AG04450 (cell line): ENCODE measurements at regions of chr2 and their contacts with region 1.

Region 1: DNA sequence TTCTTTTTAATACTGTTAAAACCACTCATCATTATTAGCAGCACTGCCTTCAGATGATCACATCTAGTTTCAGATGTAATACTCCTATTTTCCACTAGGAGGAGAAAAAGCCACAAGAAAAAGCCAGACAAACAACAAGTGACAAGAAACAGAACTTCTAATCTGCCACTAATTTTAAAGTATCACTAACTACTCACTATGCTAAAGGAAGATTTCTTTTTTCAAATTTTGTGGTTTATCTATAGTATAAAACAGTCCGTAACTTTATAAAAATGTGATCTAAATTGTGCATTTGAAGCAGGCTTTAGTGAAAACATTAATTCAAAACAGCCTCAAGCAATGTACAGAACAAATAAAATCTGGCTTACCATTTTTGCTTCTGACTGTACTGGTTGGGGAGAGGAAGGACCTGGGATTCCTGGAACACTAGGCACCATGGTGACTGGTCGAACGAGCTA is 56.8 kb downstream of the ATF2 start:
- DNase-seq: no peak
- H3K4me3 ChIP-seq: no peak overlapping the region
- H3K27ac ChIP-seq: no peak overlapping the region
- H3K27me3 ChIP-seq: no peaks in the 10 kb centered on the region
- CTCF ChIP-seq: peak; percentile 73

Region 2: DNA sequence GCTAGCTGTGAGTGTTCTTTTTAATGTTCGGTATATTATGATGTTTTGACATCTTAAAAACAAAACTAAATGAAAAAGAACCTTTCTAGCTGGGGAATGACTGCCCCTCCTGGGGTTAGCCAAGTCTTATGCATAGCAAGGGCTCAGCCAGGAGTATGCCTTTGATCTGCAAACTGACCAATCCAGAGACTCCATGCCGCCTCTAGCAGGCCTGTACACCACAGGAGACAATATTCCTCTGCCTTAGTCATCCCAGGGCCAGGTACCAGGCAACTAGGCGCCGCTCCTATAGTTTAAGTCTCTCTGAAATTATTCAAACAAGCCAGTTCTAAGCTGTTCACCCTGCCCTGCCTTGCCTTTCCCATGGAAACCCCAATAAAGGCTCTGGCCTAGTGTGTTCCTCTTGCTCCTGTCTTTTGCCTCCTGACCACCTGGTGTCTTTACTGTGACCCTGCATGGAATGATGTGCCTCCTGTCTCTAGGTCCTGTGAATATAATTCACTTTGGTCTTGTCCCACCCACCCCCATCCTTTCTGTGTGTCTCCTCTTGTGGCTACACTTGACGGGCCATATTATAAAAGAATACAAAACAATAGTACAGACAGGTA is 54.0 kb before region 1 on chr2:
- CTCF ChIA-PET with region 1: no interaction called
- POLR2A ChIA-PET with region 1: no interaction called
- DNase-seq: no peak
- H3K4me3 ChIP-seq: no peak overlapping the region
- H3K27ac ChIP-seq: no peak overlapping the region
- H3K27me3 ChIP-seq: no peaks in the 10 kb centered on the region
- CTCF ChIP-seq: no peak

Region 3: DNA sequence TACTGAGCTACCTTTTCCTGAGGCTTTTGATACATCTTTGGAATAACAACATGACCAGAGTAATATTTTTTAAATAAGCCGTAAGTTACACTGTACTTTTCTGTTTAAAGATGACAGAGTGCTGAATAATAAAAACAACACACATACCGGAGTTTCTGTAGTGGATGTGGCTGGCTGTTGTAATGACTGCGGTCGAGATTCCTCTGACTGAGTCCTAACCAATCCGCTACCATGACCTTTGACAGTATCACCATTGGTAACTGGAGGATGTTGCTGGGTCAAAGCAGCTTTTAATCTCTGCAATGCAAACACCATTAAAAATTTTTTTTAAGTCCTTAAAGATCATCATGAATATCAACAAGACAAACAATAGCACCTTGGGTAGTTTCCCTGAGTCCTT is 13.9 kb before region 1 on chr2:
- CTCF ChIA-PET with region 1: interaction called, 11 read pairs
- POLR2A ChIA-PET with region 1: interaction called, 3 read pairs
- DNase-seq: peak; percentile 78
- H3K4me3 ChIP-seq: no peak overlapping the region
- H3K27ac ChIP-seq: no peak overlapping the region
- H3K27me3 ChIP-seq: no peaks in the 10 kb centered on the region
- CTCF ChIP-seq: no peak

Region 4: DNA sequence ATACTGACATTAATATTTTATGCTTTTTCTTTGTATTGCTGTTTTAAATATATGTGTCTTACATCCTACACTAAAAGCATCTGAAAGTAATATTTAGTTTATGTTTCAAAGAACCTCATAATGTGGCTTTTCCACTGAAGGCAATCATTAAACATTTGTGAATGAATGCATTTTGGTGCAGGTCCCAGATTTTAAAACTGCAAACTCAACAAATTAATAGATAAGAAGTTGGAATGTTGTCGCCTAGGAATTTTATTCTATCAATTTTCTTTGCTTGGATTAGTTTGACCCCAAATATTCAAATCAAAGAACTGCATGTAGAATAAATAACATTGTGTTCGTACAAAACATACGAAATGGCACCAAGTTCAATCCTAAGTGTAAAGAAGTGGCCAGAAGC is 12.0 kb after region 1 on chr2:
- CTCF ChIA-PET with region 1: interaction called, 12 read pairs
- POLR2A ChIA-PET with region 1: no interaction called
- DNase-seq: no peak
- H3K4me3 ChIP-seq: no peak overlapping the region
- H3K27ac ChIP-seq: no peak overlapping the region
- H3K27me3 ChIP-seq: no peaks in the 10 kb centered on the region
- CTCF ChIP-seq: no peak